Tibial artery (tissue), 4 donors: ENCODE measurements at regions of chr14 and their contacts with region 1.

Region 1: DNA sequence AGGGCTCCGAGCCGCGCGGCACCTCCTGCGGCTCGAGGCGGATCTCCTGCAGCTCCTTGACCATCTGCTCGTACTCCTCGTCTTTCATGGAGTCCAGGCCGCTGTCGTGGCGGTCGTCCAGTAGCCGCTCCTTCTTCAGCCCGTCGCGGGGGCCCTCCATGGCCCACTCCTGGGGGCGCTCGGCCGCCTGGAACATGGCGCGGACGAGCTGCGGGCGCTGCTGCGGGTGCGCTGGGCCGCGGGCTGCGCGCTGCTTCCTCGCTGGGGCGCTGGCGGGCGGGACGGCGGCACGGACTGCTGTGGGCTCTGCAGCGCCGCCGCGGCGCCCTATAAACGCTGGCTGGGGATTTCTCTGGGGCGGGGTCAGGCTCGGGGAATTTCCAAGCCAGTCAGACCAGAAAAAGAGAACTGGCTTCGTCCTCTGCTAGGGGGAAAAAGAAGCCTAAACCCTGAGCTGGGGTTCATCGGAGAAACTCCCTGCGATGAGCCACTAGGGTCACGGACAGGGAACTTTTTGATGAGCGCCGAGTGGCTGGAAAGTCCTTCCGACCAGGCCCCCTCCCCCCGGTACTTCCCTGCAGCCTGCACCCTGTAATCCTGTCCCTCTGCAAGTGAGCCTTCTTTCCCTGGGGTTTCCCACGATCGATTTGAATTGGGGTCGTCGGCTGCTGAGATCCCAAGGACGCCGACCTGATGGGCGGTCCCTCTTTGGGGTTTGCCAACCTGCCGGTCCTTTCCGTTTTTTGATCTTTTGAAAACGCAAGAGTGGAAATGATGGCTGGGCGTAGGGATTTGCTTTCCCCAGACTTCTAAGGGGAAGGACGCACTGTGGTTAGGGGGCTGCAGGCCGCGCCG is at the start of gene NFKBIA:
- DNase-seq: peak; percentile 89 to 95
- H3K4me3 ChIP-seq: peak within 1 kb of the TSS; percentile 70 to 90
- H3K27ac ChIP-seq: peak within 1 kb of the TSS; percentile 96 to 98
- H3K4me1 ChIP-seq: peaks cover 0 to 39% (median 27%) of the 10 kb centered on the region in 4 donors
- H3K27me3 ChIP-seq: no peaks in the 10 kb centered on the region
- CTCF ChIP-seq: peak; percentile 24 to 30

Region 2: DNA sequence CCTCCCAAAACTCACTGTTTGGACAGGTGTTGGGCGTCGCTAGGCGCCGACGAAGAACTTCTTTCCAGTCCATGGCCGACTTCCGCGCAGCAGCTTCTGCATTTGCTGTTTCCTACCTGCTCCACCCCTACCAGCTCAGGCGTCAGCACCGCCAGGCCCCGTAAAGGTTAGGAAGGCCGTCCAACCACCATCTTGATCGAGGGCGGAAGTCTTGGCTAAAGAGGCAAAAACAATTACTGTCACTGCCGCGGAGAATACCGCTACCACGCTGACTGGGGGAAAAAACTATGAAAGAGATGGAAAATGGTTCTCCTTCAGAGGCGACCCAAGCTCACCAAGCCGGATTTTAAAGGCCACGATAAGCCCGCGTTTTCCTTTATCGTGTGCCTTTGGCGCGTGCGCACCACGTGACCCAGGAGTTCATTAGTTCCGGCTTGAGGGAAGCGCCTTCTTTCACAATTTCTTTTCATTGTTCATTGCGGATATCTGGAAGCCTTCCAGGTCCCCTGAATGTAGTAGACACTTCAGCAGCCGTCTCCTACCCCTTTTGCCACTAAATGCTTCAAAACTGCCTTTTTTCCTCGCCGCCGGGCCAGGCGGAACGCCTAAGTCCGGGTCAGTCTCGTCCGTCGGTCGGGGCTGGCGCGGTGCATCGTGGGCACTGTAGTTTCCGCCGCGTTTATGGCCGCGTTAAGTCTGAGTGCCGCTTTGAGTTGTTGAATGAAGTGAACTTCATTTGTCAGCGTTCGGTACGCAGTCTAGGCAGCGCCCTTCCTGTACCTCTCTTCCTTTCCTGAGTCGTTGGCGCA is 282.6 kb before region 1 on chr14 and contains the starts of genes PPP2R3C and PRORP:
- intact Hi-C with region 1: loop called (anchors 5 kb)
- DNase-seq: peak; percentile 95 to 96
- H3K4me3 ChIP-seq: peak within 1 kb of the TSS; percentile 61 to 66
- H3K27ac ChIP-seq: peak within 1 kb of the TSS; percentile 85 to 93
- H3K4me1 ChIP-seq: peaks cover 3 to 49% (median 25%) of the 10 kb centered on the region in 4 donors
- H3K27me3 ChIP-seq: no peaks in the 10 kb centered on the region
- CTCF ChIP-seq: no peak

Region 3: GRCh38 chr14:35189422-35189821 is 215.3 kb before region 1 on chr14:
- intact Hi-C with region 1: no loop called
- DNase-seq: no peak
- H3K4me3 ChIP-seq: no peak overlapping the region
- H3K27ac ChIP-seq: no peak overlapping the region
- H3K4me1 ChIP-seq: no peaks in the 10 kb centered on the region
- H3K27me3 ChIP-seq: no peaks in the 10 kb centered on the region
- CTCF ChIP-seq: no peak

Region 4: GRCh38 chr14:35213869-35214387 is 190.7 kb before region 1 on chr14:
- intact Hi-C with region 1: loop called (anchors 5 kb)
- DNase-seq: no peak
- H3K4me3 ChIP-seq: no peak overlapping the region
- H3K27ac ChIP-seq: peak overlapping the region; percentile 5
- H3K4me1 ChIP-seq: peaks cover 0 to 11% (median 1%) of the 10 kb centered on the region in 4 donors
- H3K27me3 ChIP-seq: no peaks in the 10 kb centered on the region
- CTCF ChIP-seq: no peak

Region 5: DNA sequence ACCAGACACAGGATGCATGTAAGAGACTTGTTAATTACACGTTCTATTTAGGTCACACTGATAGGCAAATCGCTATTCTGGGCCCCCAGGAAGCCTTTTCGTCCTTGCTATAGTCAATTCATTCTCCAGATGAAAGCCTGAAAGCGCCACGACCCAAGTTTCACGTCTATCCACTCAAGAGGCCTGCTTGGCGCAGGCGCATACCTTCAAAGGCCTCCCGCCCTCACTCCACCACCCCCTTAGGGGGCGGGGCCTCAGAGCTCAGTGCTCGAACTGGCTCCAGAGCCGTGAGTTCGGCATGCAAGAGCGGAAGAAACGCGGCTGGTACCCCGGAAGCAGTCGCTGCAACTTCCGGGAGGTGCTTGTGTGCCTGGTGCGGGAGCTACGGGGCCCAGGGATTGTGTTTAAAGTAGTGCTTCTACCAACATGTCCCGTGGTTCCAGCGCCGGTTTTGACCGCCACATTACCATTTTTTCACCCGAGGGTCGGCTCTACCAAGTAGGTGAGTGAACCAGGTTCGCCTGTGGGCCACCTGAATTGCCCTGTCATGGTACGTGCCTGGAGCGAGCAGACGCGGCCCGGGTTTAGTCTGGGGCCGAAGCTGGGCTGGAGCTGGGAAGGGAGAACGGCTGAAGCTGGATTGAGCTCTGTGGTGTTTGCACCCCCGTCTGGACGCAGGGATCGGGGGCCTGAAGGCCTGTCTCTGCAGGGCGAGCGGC is 112.5 kb before region 1 on chr14 and contains the start of gene PSMA6:
- intact Hi-C with region 1: loop called (anchors 2 kb)
- DNase-seq: peak; percentile 99
- H3K4me3 ChIP-seq: peak within 1 kb of the TSS; percentile 79 to 94
- H3K27ac ChIP-seq: peak within 1 kb of the TSS; percentile 85 to 94
- H3K4me1 ChIP-seq: peaks cover 5 to 51% (median 33%) of the 10 kb centered on the region in 4 donors
- H3K27me3 ChIP-seq: no peaks in the 10 kb centered on the region
- CTCF ChIP-seq: no peak

Region 6: DNA sequence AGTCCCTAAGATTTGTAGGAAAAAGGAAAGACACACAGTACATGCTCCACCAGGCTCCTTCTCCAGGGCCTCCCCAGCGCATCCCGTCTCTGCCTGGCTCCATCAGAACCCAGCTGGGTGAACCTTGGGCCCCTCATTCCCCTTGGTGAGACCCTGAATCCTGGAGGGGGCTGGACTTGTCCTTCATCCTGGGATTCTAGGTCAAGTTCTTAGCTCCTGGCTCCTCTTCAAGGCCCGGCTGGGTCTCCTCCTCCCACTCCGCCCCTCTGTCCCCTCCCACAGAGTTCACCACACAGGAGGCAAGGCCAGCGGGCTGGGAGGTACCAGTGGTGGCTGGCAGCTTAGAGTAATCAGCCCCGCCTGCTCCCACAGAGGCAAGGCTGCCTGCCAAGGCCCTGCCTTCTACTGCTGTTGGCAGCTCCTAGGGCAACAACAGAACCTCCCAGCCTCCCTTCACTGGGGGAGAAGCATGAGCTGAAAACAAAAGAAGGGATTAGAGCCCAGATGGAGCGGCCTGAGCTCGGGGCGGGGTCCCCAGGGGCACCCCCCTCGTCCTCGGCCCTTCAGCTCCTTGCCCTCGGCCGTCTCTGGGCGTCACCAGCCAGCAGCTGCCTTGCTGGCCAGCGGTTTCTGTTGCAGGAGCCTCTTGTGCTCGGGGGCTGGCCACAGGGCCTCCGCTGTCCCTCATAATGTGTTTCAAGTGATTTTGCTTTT is 63.1 kb before region 1 on chr14:
- intact Hi-C with region 1: loop called (anchors 2 kb)
- DNase-seq: peak; percentile 99 to 100
- H3K4me3 ChIP-seq: peak overlapping the region; percentile 48 to 51
- H3K27ac ChIP-seq: peak overlapping the region; percentile 92 to 98
- H3K4me1 ChIP-seq: peaks cover 15 to 65% (median 47%) of the 10 kb centered on the region in 4 donors
- H3K27me3 ChIP-seq: no peaks in the 10 kb centered on the region
- CTCF ChIP-seq: no peak